WTC11 (cell line): ENCODE measurements at regions of chr11 and their contacts with region 1.

Region 1: GRCh38 chr11:17730608-17731462 is 3.7 kb upstream of the KCNC1 start:
- DNase-seq: peak; percentile 90
- ATAC-seq: peak; percentile 77
- H3K4me3 Mint-ChIP-seq: no peak overlapping the region
- H3K27ac Mint-ChIP-seq: no peak overlapping the region
- H3K4me1 Mint-ChIP-seq: peaks cover 3% of the 10 kb centered on the region; the same call in 1 of the 2 replicates
- H3K27me3 Mint-ChIP-seq: peaks cover 54% of the 10 kb centered on the region
- CTCF ChIP-seq: peak; percentile 41

Region 2: GRCh38 chr11:17535486-17535885 is 195.3 kb before region 1 on chr11:
- CTCF ChIA-PET with region 1: no interaction called
- POLR2A ChIA-PET with region 1: no interaction called
- DNase-seq: no peak
- ATAC-seq: no peak
- H3K4me3 Mint-ChIP-seq: no peak overlapping the region
- H3K27ac Mint-ChIP-seq: no peak overlapping the region
- H3K4me1 Mint-ChIP-seq: peaks cover 11% of the 10 kb centered on the region
- H3K27me3 Mint-ChIP-seq: no peaks in the 10 kb centered on the region
- CTCF ChIP-seq: no peak

Region 3: GRCh38 chr11:17585911-17586695 is 144.7 kb before region 1 on chr11:
- CTCF ChIA-PET with region 1: interaction called, 12 read pairs
- POLR2A ChIA-PET with region 1: no interaction called
- DNase-seq: peak; percentile 3
- ATAC-seq: no peak; the same call in 1 of the 2 replicates
- H3K4me3 Mint-ChIP-seq: no peak overlapping the region
- H3K27ac Mint-ChIP-seq: no peak overlapping the region
- H3K4me1 Mint-ChIP-seq: no peaks in the 10 kb centered on the region
- H3K27me3 Mint-ChIP-seq: no peaks in the 10 kb centered on the region
- CTCF ChIP-seq: no peak

Region 4: GRCh38 chr11:17714356-17714854 is 16.4 kb before region 1 on chr11:
- CTCF ChIA-PET with region 1: interaction called, 161 read pairs
- POLR2A ChIA-PET with region 1: no interaction called
- DNase-seq: peak; percentile 55
- ATAC-seq: peak; percentile 68
- H3K4me3 Mint-ChIP-seq: no peak overlapping the region
- H3K27ac Mint-ChIP-seq: no peak overlapping the region
- H3K4me1 Mint-ChIP-seq: peaks cover 11% of the 10 kb centered on the region
- H3K27me3 Mint-ChIP-seq: peaks cover 6% of the 10 kb centered on the region
- CTCF ChIP-seq: no peak

Region 5: GRCh38 chr11:17770048-17770652 is 39.3 kb after region 1 on chr11:
- CTCF ChIA-PET with region 1: interaction called, 72 read pairs
- POLR2A ChIA-PET with region 1: no interaction called
- DNase-seq: peak; percentile 49
- ATAC-seq: peak; percentile 29
- H3K4me3 Mint-ChIP-seq: no peak overlapping the region
- H3K27ac Mint-ChIP-seq: peak overlapping the region; percentile 38; the same call in 1 of the 2 replicates
- H3K4me1 Mint-ChIP-seq: peaks cover 4% of the 10 kb centered on the region; the same call in 1 of the 2 replicates
- H3K27me3 Mint-ChIP-seq: no peaks in the 10 kb centered on the region
- CTCF ChIP-seq: no peak

Region 6: GRCh38 chr11:17915500-17916143 is 184.8 kb after region 1 on chr11:
- CTCF ChIA-PET with region 1: interaction called, 10 read pairs
- POLR2A ChIA-PET with region 1: no interaction called
- DNase-seq: no peak
- ATAC-seq: no peak
- H3K4me3 Mint-ChIP-seq: no peak overlapping the region
- H3K27ac Mint-ChIP-seq: no peak overlapping the region
- H3K4me1 Mint-ChIP-seq: peaks cover 34% of the 10 kb centered on the region
- H3K27me3 Mint-ChIP-seq: no peaks in the 10 kb centered on the region; the same call in 1 of the 2 replicates
- CTCF ChIP-seq: no peak

Region 7: GRCh38 chr11:17978553-17979287 is 247.9 kb after region 1 on chr11:
- CTCF ChIA-PET with region 1: interaction called, 99 read pairs
- POLR2A ChIA-PET with region 1: no interaction called
- DNase-seq: peak; percentile 73
- ATAC-seq: peak; percentile 97
- H3K4me3 Mint-ChIP-seq: no peak overlapping the region
- H3K27ac Mint-ChIP-seq: 0 out of 2 replicates have a peak overlapping the region, but pooled peaks have one; percentile 86
- H3K4me1 Mint-ChIP-seq: no peaks in the 10 kb centered on the region
- H3K27me3 Mint-ChIP-seq: no peaks in the 10 kb centered on the region
- CTCF ChIP-seq: no peak; the same call in 1 of the 2 replicates